ENCODE measurements at regions of chr4 and their contacts with region 1.

Region 1: DNA sequence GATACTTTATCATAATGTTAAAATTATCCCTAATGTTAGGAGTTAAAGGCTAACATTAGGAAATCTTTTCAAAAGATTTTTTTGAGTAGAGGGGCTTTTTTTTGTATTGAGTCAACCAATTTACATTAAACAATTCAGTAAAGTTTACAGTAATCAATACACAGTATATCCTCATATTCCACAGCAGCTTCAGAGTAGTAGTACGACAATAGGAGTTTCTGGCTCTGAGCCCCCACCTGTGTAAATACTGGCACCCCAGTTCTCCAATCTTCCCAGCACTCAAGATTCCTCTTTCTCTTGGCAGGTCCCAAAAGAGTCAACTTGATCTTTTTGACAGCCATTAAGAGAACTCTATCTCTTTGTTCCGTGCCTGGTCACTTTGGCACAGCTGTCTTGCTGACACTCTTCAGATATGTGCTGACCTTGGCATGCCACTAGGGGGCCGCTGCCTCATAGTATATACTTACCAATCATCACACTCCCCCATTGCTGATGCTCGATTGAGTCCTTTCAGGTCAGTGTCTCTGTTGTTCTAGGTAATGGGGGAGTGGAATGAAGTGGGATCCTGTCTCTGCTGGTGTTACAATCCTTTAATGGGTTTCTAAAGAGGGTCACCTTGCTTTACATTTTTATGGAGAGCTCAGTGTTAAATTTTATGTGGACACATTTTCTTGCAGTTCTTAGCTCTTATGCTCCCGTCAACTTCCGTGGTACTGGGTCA is 19.5 kb upstream of the CCNI start:
- DNase-seq: peak; percentile 85 to 90
- ATAC-seq: peak; percentile 91
- H3K4me3 ChIP-seq: no peak overlapping the region
- H3K27ac ChIP-seq: no peak overlapping the region
- H3K4me1 ChIP-seq: peaks cover 0 to 3% of the 10 kb centered on the region in 2 donors
- H3K27me3 ChIP-seq: no peaks in the 10 kb centered on the region

Region 2: DNA sequence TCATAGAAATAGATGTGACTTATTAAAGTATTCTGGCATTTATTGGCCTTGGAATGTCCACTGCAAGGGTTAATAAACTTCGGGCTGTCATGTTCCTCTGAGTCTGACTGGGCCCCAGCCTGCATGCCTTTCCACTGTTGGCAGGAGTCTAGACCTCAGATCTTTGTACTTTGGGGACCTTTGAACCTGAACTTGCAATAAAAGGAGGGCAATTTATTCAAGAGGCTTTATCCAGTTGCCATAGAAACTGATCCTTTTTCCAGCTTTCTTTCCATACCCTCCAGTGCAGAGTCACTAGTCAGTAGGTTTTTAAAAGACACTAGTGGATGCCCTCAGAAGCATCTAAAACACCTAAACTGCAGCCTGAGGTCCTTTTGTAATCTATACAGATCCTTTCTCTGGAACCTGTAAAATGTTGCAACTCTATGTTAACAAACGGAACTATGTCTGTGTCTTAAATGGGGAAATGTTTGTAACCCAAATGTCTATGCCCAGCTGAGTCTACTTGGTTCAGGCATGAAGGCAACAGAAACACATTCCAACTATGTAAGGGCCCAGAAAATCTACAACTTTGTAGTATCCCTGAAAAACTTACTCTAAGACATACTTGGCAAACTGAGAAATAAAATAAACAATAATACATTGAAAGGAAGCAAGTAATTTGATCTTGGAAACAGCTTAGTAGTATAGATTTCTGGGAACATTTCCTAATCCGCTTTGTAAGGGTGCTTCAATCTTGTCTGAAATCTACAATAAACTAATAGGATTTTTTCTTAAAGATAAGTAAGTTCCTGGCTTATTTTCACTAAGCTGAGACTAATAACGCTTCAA is 238.8 kb before region 1 on chr4:
- intact Hi-C with region 1: no loop called
- DNase-seq: no peak
- ATAC-seq: peak; percentile 19
- H3K4me3 ChIP-seq: no peak overlapping the region
- H3K27ac ChIP-seq: no peak overlapping the region
- H3K4me1 ChIP-seq: peaks cover 0 to 7% of the 10 kb centered on the region in 2 donors
- H3K27me3 ChIP-seq: no peaks in the 10 kb centered on the region

Region 3: DNA sequence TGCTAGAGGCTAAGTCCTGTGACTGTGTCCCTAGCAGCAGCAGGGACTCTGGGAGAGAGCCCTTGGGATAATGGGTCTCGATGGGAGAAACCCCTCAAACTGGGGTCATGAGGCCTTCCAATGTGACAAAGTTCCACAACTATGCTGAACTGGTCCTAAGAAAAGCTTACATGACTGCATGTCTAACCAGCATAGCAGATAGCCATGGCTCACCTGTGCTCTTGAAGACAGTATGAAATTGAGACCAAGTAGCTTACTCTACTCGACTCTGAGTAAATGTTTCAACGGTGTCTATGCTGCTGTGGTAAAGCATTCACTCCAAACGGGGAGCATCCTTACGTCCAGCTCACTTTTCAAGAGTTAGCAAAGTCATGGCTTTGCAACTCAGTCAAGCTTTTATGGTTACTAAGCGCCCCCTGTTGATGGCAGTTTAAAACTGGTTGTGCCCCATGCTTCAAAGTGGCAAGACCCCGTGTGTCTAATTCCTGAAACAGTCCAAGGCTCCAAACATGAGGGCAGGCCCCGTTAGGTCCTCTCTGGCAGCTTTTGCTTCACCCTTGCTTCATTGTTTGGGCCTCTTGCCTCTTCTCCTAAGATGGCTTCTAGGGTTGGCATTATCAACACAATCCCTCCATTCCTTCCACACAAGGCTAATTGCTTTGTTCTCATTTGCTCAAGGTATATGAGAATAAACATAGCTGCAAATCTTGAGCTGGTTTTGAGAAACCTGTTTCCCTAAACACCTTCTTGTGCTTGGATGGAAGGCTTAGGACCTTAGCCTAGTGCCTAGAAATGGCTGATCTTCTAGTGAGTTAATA is 108.3 kb after region 1 on chr4:
- intact Hi-C with region 1: loop called (anchors 2 to 5 kb)
- DNase-seq: peak in 1 of 2 donors; percentile 59
- ATAC-seq: peak; percentile 68
- H3K4me3 ChIP-seq: no peak overlapping the region
- H3K27ac ChIP-seq: no peak overlapping the region
- H3K4me1 ChIP-seq: no peaks in the 10 kb centered on the region
- H3K27me3 ChIP-seq: no peaks in the 10 kb centered on the region